Activated CD4-positive, alpha-beta T cell treated with anti-CD3 and anti-CD28 coated beads for 36 hours (primary cell): ENCODE measurements at regions of chr1 and their contacts with region 1.

Region 1: DNA sequence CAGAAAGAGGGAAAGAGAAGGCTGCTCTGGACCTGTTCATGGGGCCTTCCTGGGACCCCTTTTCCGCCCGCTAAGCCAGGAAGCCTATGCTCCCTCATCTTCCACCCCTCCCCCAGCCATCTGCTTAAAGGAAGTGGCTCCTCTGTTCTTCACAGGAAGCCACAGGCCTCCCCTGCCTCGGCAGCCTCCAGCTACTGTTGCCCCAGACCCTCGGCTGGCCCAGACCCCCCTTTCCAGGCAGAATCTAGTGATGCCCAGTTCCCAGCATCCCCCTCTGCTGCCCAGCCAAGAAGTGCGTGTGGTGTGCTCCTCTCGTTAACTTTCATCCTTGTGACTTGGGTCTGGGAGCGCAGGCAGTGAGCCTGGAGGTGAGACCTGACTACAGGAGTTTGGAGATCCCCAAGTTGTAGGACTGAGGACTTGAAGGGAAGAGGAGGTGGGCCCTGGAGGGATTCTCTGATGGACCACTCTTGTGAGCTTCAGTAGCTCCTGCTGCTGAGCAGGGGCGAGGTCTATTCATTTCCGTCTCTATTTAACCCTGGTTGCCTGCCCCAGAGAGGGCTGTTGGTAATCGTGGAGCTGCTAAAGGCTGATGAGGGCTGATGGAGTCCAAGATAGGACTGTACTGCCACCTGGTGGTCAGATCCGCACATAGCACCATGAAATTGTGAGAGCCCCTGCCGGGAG is 9.1 kb downstream of the IFI6 start:
- DNase-seq: peak; percentile 94
- ATAC-seq: peak; percentile 84
- H3K4me3 Mint-ChIP-seq: peak overlapping the region; percentile 70
- H3K27ac Mint-ChIP-seq: peak overlapping the region; percentile 98
- H3K4me1 Mint-ChIP-seq: peaks cover 45% of the 10 kb centered on the region
- H3K27me3 Mint-ChIP-seq: no peaks in the 10 kb centered on the region

Region 2: DNA sequence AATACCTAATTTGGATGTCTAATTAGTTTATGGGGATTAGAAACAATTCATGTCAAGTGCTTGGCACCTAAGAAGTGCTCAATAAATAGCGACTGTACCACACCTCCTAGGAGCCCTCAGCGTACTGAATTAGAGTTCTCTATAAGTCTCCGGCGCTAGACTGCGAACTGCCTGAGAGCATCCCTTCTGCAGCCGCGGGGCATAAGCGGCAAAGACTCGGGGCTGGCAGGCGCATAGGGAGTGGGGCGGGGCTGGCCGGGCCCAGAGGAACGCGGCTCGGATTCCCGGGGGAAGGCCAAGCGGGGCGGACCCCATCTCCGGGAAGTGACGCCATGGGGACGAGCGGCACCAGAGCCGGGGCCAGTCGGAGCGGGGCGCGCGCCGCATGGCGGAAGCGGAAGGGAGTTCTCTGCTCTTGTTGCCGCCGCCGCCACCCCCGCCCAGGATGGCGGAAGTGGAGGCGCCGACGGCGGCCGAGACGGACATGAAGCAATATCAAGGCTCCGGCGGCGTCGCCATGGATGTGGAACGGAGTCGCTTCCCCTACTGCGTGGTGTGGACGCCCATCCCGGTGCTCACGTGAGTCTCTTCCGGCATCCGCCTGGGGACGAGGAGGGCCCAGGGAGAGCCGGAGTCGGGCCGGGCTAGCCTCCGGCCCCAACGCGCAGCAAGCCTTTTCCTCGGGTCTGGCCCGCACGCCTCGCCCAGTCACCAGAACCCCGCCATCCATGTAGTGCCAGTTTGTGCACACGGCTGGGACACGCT is 340.9 kb before region 1 on chr1 and contains the start of gene TMEM222:
- CTCF ChIA-PET with region 1: no interaction called
- POLR2A ChIA-PET with region 1: interaction called, 3 read pairs
- intact Hi-C with region 1: loop called in 1 of 2 experiments (anchors 1 kb)
- DNase-seq: peak; percentile 99
- ATAC-seq: peak; percentile 98
- H3K4me3 Mint-ChIP-seq: peak within 1 kb of the TSS; percentile 94
- H3K27ac Mint-ChIP-seq: peak within 1 kb of the TSS; percentile 90
- H3K4me1 Mint-ChIP-seq: peaks cover 41% of the 10 kb centered on the region
- H3K27me3 Mint-ChIP-seq: no peaks in the 10 kb centered on the region
- total RNA-seq, gene TMEM222: 27.5 to 31.2 TPM

Region 3: GRCh38 chr1:27525296-27526272 is 137.3 kb before region 1 on chr1:
- CTCF ChIA-PET with region 1: interaction called, 5 read pairs
- POLR2A ChIA-PET with region 1: no interaction called
- intact Hi-C with region 1: loop called in 1 of 2 experiments (anchors 2 kb)
- DNase-seq: peak; percentile 87
- ATAC-seq: peak; percentile 53
- H3K4me3 Mint-ChIP-seq: peak overlapping the region; percentile 63
- H3K27ac Mint-ChIP-seq: peak overlapping the region; percentile 81
- H3K4me1 Mint-ChIP-seq: peaks cover 60% of the 10 kb centered on the region
- H3K27me3 Mint-ChIP-seq: no peaks in the 10 kb centered on the region

Region 4: GRCh38 chr1:27568300-27569087 is 94.4 kb before region 1 on chr1:
- CTCF ChIA-PET with region 1: interaction called, 6 read pairs
- POLR2A ChIA-PET with region 1: no interaction called
- intact Hi-C with region 1: loop called in 1 of 2 experiments (anchors 1 kb)
- DNase-seq: peak; percentile 95
- ATAC-seq: peak; percentile 97
- H3K4me3 Mint-ChIP-seq: peak overlapping the region; percentile 39
- H3K27ac Mint-ChIP-seq: no peak overlapping the region
- H3K4me1 Mint-ChIP-seq: peaks cover 18% of the 10 kb centered on the region
- H3K27me3 Mint-ChIP-seq: no peaks in the 10 kb centered on the region

Region 5: DNA sequence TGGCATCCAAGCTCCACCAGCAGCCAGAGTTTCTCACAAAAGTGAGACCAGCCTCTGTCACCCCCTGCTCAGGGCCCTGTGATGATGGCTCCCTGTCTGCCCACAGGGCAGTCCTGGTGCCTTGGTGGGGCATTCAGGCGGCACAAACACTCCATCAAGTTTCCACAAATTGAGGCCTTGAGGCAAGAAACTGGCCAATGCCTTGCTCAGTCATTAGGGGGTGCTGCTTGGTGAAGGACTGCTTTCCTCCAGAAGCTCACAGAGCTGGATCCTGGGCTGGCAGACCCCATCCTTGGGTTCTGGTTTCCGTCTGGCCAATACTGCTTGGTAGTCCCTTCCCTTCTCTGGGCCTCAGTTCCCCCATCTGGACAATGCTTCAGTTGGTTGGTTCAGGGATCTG is 46.4 kb before region 1 on chr1:
- CTCF ChIA-PET with region 1: interaction called, 33 read pairs
- POLR2A ChIA-PET with region 1: no interaction called
- intact Hi-C with region 1: no loop called
- DNase-seq: no peak
- ATAC-seq: no peak
- H3K4me3 Mint-ChIP-seq: no peak overlapping the region
- H3K27ac Mint-ChIP-seq: no peak overlapping the region
- H3K4me1 Mint-ChIP-seq: peaks cover 47% of the 10 kb centered on the region
- H3K27me3 Mint-ChIP-seq: no peaks in the 10 kb centered on the region

Region 6: GRCh38 chr1:27643701-27644625 is 18.9 kb before region 1 on chr1:
- CTCF ChIA-PET with region 1: interaction called, 15 read pairs
- POLR2A ChIA-PET with region 1: no interaction called
- intact Hi-C with region 1: loop called (anchors 1 kb)
- DNase-seq: peak; percentile 82
- ATAC-seq: peak; percentile 99
- H3K4me3 Mint-ChIP-seq: no peak overlapping the region
- H3K27ac Mint-ChIP-seq: no peak overlapping the region
- H3K4me1 Mint-ChIP-seq: peaks cover 13% of the 10 kb centered on the region
- H3K27me3 Mint-ChIP-seq: no peaks in the 10 kb centered on the region

Region 7: DNA sequence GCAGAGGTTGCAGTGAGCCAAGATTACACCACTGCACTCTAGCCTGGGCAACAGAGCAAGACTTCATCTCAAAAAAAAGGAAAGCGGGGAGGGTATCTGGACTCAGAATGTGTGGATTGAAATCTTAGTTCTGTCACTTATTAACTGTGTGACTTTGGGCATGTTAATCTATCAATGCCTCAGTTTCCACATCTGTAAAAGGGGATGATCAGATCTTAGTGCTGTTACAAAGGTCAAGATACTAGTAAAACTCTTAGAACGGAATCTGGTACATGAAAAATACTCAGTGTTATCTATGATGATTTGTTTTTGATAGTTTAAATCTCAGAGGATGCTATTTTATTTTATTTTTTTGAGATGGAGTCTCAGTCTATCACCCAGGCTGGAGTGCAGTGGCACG is 73.4 kb after region 1 on chr1:
- CTCF ChIA-PET with region 1: no interaction called
- POLR2A ChIA-PET with region 1: no interaction called
- intact Hi-C with region 1: no loop called
- DNase-seq: no peak
- ATAC-seq: no peak
- H3K4me3 Mint-ChIP-seq: no peak overlapping the region
- H3K27ac Mint-ChIP-seq: no peak overlapping the region
- H3K4me1 Mint-ChIP-seq: no peaks in the 10 kb centered on the region
- H3K27me3 Mint-ChIP-seq: no peaks in the 10 kb centered on the region